Endothelial cell of umbilical vein (primary cell): ENCODE measurements at regions of chr3 and their contacts with region 1.

Region 1: GRCh38 chr3:41450416-41451231 is 251.3 kb downstream of the CTNNB1 start:
- DNase-seq: no peak
- H3K4me3 ChIP-seq: no peak overlapping the region
- H3K27ac ChIP-seq: no peak overlapping the region
- H3K4me1 ChIP-seq: no peaks in the 10 kb centered on the region
- H3K27me3 ChIP-seq: no peaks in the 10 kb centered on the region
- CTCF ChIP-seq: no peak
- POLR2A ChIP-seq: no peak

Region 2: GRCh38 chr3:41394896-41395295 is 55.7 kb before region 1 on chr3:
- CTCF ChIA-PET with region 1: no interaction called
- POLR2A ChIA-PET with region 1: no interaction called
- dilution Hi-C with region 1: no loop called
- intact Hi-C with region 1: loop called (anchors 2 kb)
- DNase-seq: no peak
- H3K4me3 ChIP-seq: no peak overlapping the region
- H3K27ac ChIP-seq: no peak overlapping the region
- H3K4me1 ChIP-seq: no peaks in the 10 kb centered on the region
- H3K27me3 ChIP-seq: no peaks in the 10 kb centered on the region
- CTCF ChIP-seq: no peak
- POLR2A ChIP-seq: no peak

Region 3: GRCh38 chr3:41592753-41593510 is 142.3 kb after region 1 on chr3:
- CTCF ChIA-PET with region 1: no interaction called
- POLR2A ChIA-PET with region 1: no interaction called
- dilution Hi-C with region 1: no loop called
- intact Hi-C with region 1: no loop called
- DNase-seq: no peak
- H3K4me3 ChIP-seq: no peak overlapping the region
- H3K27ac ChIP-seq: no peak overlapping the region
- H3K4me1 ChIP-seq: no peaks in the 10 kb centered on the region
- H3K27me3 ChIP-seq: no peaks in the 10 kb centered on the region
- CTCF ChIP-seq: no peak
- POLR2A ChIP-seq: no peak